HEK293 (cell line): ENCODE measurements at regions of chr15 and their contacts with region 1.

Region 1: GRCh38 chr15:99704444-99704838 is 28.8 kb downstream of the LYSMD4 start:
- H3K4me3 ChIP-seq: no peak overlapping the region
- H3K27ac ChIP-seq: no peak overlapping the region
- H3K4me1 ChIP-seq: peaks cover 7% of the 10 kb centered on the region
- CTCF ChIP-seq: peak; percentile 38; the same call in 1 of the 2 replicates

Region 2: DNA sequence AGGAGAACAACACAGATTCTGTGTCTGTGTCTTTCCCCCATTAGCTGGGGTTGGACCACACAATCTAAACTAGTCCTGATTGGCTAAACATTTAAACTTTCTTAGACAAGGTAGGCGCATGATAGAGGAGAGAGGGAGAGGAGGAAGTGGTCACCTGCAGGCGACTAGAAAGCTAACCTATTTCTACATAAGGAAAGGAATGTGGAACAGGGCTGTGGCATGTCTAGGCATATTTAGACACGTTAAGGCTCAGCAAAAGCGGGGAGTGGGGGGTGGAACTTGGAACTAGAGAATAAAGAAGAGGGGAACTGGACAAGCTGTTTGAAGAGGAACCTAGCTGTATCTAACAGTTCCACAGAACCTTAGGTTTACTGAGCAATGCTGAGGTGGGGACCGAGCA is 440.3 kb before region 1 on chr15:
- CTCF ChIA-PET with region 1: interaction called, 16 read pairs
- POLR2A ChIA-PET with region 1: no interaction called
- H3K4me3 ChIP-seq: no peak overlapping the region
- H3K27ac ChIP-seq: no peak overlapping the region
- H3K4me1 ChIP-seq: peaks cover 12% of the 10 kb centered on the region
- CTCF ChIP-seq: no peak

Region 3: GRCh38 chr15:99296386-99296785 is 408.1 kb before region 1 on chr15:
- CTCF ChIA-PET with region 1: interaction called, 23 read pairs
- POLR2A ChIA-PET with region 1: no interaction called
- H3K4me3 ChIP-seq: no peak overlapping the region
- H3K27ac ChIP-seq: no peak overlapping the region
- H3K4me1 ChIP-seq: no peaks in the 10 kb centered on the region
- CTCF ChIP-seq: no peak

Region 4: DNA sequence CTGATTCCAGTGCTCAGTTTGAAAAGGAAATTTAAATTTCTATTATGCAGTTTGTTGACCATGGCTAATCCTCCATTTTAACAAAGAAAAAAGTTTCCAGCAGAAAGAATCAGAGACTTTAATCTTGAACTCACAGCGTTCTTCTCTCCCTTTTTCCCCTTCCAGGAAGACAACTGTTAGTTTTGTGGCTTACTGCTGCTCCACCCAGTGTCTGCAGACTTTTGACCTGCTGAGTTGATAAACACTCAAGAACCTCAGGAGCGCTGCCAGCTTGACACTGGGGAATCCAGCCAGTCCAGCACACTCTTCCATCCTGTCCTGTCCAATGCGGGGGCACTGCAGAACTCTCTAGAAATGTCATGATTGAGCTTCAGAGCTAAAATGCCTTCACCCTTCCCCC is 318.6 kb before region 1 on chr15:
- CTCF ChIA-PET with region 1: interaction called, 13 read pairs
- POLR2A ChIA-PET with region 1: no interaction called
- H3K4me3 ChIP-seq: no peak overlapping the region
- H3K27ac ChIP-seq: no peak overlapping the region
- H3K4me1 ChIP-seq: no peaks in the 10 kb centered on the region
- CTCF ChIP-seq: no peak

Region 5: DNA sequence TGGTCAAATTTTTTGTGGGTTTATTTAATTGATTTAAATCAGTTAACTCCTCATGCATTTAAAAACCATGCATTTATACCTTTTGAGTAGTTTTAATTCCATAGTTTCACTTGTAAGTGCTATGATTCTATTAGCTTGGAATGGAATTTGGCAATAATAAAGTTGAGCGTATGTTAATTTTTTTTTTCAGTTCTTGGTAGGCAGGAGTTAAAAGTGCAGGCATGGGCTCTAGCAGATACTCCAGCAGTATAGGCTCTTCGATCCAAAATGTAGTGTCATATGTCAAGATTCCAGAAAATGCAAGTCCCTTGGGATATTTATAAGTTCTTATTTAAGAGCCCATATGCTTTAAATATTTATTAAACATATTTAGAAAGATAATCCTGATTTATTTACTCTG is 41.5 kb before region 1 on chr15:
- CTCF ChIA-PET with region 1: interaction called, 14 read pairs
- POLR2A ChIA-PET with region 1: no interaction called
- H3K4me3 ChIP-seq: no peak overlapping the region
- H3K27ac ChIP-seq: no peak overlapping the region
- H3K4me1 ChIP-seq: no peaks in the 10 kb centered on the region; the same call in 1 of the 2 replicates
- CTCF ChIP-seq: no peak

Region 6: DNA sequence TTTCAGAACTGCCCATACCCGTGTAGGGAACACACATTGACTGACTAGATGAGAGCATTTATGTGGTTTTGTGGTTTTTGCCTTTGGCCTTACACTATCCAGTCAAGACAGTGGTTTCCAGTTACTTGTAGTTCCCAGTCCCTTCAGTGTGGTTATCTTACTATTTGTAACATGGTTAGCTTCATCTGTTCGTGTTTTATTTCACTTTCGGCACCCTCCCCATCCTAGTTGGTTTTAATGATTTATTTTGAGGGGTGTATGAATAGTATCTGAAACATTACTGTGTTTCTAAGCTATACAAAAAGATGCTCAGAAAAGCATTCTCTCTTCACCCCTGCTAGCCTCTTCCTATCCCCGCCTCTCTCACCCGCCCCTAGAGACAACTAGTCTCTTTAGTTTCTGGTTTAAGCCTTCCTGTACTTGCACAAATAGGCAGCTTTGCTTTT is 14.7 kb after region 1 on chr15:
- CTCF ChIA-PET with region 1: interaction called, 25 read pairs
- POLR2A ChIA-PET with region 1: no interaction called
- H3K4me3 ChIP-seq: no peak overlapping the region
- H3K27ac ChIP-seq: no peak overlapping the region
- H3K4me1 ChIP-seq: no peaks in the 10 kb centered on the region
- CTCF ChIP-seq: no peak